Caki2 (cell line): ENCODE measurements at regions of chr7 and their contacts with region 1.

Region 1: DNA sequence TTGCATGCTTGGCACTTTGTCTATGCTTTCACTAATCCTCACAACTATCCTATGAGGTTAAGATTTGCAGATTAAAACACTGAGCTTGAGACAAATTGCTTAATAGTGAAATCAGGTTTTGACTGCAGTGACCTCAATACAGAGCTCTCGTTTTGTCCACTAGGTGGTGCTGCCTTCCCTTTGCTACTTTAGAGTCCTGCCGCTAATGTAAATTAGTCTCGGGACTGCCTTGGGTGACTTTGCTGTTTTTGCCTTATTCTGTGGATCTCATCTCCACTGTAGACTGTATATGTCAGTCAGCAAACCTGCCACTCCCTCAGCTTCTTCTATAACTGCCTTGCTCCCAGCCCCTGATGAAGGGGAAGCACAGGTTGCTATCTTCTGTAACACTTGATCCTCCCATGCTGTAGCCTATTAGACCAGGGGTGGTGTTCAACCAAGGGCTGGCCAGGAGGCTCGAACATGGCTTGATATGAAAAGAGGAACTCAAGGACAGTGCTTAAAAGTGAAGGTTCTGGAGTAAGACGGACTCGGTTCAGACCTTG is 26.0 kb downstream of the ASB4 start:
- DNase-seq: peak; percentile 69

Region 2: GRCh38 chr7:94436018-94436604 is 1075.7 kb before region 1 on chr7:
- in situ Hi-C with region 1: loop called (anchors 25 kb)
- DNase-seq: peak; percentile 41